Endothelial cell of umbilical vein (primary cell): ENCODE measurements at regions of chr7 and their contacts with region 1.

Region 1: DNA sequence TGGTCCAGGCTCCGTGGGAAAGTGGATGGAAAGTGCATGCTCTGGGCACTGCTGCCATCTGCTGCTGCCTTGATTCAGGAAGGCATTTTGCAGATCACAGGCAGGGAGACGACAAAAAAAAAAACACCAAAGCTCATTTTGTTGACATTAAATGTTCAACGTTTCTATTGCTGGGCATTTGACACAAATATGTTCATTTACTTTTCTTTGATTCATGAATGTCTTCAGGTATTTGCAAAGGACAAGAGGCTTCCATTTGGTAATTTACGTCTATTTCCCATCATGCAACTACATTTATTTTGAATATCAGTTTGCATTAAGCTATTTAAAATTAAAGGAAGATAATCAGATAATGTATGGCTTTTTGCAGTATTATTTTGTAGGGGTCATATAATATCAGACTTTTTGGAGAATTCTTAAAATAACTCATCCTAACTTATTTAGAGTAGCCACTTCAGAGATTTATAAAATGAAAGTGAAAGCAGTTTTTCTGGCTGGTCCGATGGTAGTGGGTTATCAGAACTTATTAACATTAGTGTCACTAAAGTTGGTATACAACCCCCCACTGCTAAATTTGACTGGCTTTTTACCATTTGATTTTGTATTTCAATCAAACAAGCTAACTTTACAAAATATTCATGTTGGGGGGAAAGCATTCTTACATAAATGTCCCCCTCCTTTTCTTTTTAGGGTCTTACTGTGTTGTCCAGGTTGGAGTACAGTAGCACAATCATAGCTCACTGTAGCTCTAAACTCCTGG is 65.3 kb downstream of the PDIA4 start:
- DNase-seq: peak; percentile 87
- H3K4me3 ChIP-seq: peak overlapping the region; percentile 56 to 92 (median 86)
- H3K27ac ChIP-seq: peak overlapping the region; percentile 50
- H3K4me1 ChIP-seq: peaks cover 12% of the 10 kb centered on the region
- H3K27me3 ChIP-seq: no peaks in the 10 kb centered on the region
- CTCF ChIP-seq: peak; percentile 65 to 75
- POLR2A ChIP-seq: no peak

Region 2: GRCh38 chr7:148503875-148504487 is 459.0 kb before region 1 on chr7:
- CTCF ChIA-PET with region 1: interaction called, 37 read pairs
- POLR2A ChIA-PET with region 1: no interaction called
- dilution Hi-C with region 1: no loop called
- intact Hi-C with region 1: loop called (anchors 1 kb)
- DNase-seq: peak; percentile 41
- H3K4me3 ChIP-seq: no peak overlapping the region
- H3K27ac ChIP-seq: no peak overlapping the region
- H3K4me1 ChIP-seq: no peaks in the 10 kb centered on the region
- H3K27me3 ChIP-seq: peaks cover 0 to 2% of the 10 kb centered on the region in 2 experiments
- CTCF ChIP-seq: peak; percentile 36 to 37
- POLR2A ChIP-seq: no peak

Region 3: GRCh38 chr7:148575640-148576411 is 387.2 kb before region 1 on chr7:
- CTCF ChIA-PET with region 1: interaction called, 35 read pairs
- POLR2A ChIA-PET with region 1: no interaction called
- dilution Hi-C with region 1: no loop called
- intact Hi-C with region 1: loop called (anchors 1 kb)
- DNase-seq: peak; percentile 71
- H3K4me3 ChIP-seq: no peak overlapping the region
- H3K27ac ChIP-seq: no peak overlapping the region
- H3K4me1 ChIP-seq: no peaks in the 10 kb centered on the region
- H3K27me3 ChIP-seq: no peaks in the 10 kb centered on the region
- CTCF ChIP-seq: peak; percentile 81 to 82
- POLR2A ChIP-seq: no peak

Region 4: DNA sequence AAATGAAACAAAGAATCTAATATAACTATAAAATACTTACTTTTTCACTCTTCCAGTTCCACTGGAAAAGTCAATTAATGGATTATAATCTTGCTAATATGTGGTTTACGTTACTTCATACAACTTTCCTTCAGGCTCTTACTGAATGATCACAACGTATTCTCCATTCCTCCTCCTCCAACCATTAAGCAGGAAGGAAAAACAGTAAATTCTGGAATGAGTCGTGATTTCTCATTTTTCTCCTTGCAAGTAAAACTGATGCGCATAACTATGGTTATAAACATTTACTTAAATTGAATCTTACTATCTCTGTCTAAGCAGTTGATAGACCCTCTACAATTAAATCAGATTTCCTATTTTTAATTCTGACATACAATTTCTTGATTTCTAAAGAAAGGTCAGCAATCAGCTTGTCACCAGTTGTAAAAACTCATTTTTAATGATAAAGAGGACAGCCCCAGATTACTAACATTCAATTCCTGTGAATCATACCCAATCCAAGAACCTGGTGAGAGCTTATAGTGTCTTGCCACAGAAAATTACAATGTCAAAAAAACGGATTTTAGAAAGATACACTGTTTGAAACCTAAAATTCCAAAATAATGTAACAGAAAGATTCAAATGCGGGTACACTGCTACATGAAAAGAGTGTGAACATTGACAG is 143.2 kb before region 1 on chr7:
- CTCF ChIA-PET with region 1: no interaction called
- POLR2A ChIA-PET with region 1: no interaction called
- dilution Hi-C with region 1: no loop called
- intact Hi-C with region 1: loop called (anchors 10 kb)
- DNase-seq: peak; percentile 33
- H3K4me3 ChIP-seq: no peak overlapping the region
- H3K27ac ChIP-seq: peak overlapping the region; percentile 22
- H3K4me1 ChIP-seq: peaks cover 29% of the 10 kb centered on the region
- H3K27me3 ChIP-seq: no peaks in the 10 kb centered on the region
- CTCF ChIP-seq: no peak
- POLR2A ChIP-seq: no peak

Region 5: DNA sequence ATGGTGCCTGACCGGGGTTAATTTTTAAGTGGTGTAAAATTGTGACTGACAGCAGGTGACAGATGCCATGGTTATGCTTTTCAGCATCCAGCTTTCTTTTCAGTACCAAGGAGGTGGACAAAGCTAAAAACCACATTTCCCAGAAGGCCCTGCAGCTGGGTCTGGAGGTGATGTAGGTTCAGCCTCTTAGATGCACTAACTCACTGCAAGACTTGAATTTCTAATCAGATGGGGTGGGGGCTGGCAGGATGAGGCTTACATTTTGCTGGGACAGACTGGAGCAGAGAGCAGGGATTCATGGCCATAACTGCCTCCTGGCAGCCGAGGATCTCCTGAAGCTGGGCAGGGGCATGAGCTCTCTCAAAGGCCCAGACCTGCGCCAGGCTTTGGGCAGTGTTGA is 12.9 kb after region 1 on chr7:
- CTCF ChIA-PET with region 1: interaction called, 15 read pairs
- POLR2A ChIA-PET with region 1: no interaction called
- dilution Hi-C with region 1: no loop called
- intact Hi-C with region 1: no loop called
- DNase-seq: no peak
- H3K4me3 ChIP-seq: no peak overlapping the region
- H3K27ac ChIP-seq: no peak overlapping the region
- H3K4me1 ChIP-seq: no peaks in the 10 kb centered on the region
- H3K27me3 ChIP-seq: peaks cover 0 to 2% of the 10 kb centered on the region in 2 experiments
- CTCF ChIP-seq: no peak
- POLR2A ChIP-seq: no peak

Region 6: DNA sequence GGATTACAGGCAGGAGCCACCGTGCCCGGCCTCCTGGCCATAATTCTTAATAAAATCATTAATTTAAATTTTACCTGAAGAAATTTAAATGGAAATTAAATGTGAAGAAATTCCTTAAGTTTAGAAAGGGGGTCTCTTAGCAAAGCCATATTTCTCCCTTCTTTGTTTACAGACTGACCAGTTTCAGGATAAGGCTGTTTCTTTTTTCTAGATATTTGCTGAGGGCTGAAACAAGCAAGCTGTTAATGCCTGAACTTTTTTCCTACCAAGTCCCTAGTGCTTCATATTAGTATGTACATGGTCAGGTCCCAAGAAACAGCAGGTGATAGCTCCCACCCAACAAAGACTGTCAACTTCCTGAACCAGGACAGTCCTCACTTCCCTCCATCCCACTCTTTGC is 83.4 kb after region 1 on chr7:
- CTCF ChIA-PET with region 1: no interaction called
- POLR2A ChIA-PET with region 1: no interaction called
- dilution Hi-C with region 1: no loop called
- intact Hi-C with region 1: no loop called
- DNase-seq: no peak
- H3K4me3 ChIP-seq: no peak overlapping the region
- H3K27ac ChIP-seq: no peak overlapping the region
- H3K4me1 ChIP-seq: no peaks in the 10 kb centered on the region
- H3K27me3 ChIP-seq: peaks cover 0 to 1% of the 10 kb centered on the region in 2 experiments
- CTCF ChIP-seq: no peak
- POLR2A ChIP-seq: no peak

Region 7: DNA sequence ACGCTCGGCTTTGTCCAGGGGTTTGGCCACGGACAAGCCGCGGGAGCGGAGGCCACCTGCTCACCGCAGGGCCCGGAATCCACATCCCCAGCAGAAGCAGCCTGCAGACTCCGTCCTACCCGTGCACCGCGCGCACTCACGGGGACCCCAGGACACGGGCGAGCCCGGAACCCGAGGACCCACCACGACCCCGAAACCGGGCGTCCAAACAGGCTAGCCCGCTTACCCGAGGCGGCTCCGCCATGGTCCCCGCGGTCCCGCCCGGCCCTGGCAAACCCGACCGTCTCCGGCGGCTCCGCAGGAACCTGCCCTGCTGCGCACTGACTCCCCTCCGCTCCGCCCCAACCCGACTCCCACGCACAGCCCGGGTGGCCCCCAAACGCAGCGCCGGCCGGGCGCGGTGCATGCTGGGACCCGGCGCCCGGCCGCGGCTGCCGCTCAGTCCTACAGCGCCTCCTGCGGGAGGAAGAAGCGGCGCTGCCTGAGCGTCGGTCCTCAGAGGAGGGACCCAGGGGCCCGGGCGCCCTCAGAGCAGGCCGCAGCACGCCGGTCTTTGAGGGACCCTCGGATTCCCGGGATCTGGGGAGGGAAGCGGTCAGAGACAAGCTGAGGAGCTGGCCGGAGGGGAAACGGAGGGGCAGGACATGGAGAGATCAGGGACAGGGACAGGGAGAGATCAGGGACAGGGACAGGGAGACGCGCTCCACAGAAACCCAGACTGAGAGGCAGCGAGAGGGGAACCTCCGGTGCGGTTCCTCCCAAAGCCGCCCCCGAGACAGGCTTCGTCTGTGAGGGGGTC is 127.6 kb after region 1 on chr7 and contains the start of gene ZNF786:
- CTCF ChIA-PET with region 1: no interaction called
- POLR2A ChIA-PET with region 1: no interaction called
- dilution Hi-C with region 1: no loop called
- intact Hi-C with region 1: loop called (anchors 1 kb)
- DNase-seq: peak; percentile 87
- H3K4me3 ChIP-seq: peak within 1 kb of the TSS; percentile 76 to 96 (median 89)
- H3K27ac ChIP-seq: peak within 1 kb of the TSS; percentile 32
- H3K4me1 ChIP-seq: peaks cover 6% of the 10 kb centered on the region
- H3K27me3 ChIP-seq: no peaks in the 10 kb centered on the region
- CTCF ChIP-seq: peak; percentile 89 to 96
- POLR2A ChIP-seq: peak; percentile 71
- total RNA-seq, gene ZNF786: 5.4 and 5.9 TPM in 2 replicates